Activated naive CD4-positive, alpha-beta T cell treated with anti-CD3 and anti-CD28 coated beads for 36 hours (primary cell): ENCODE measurements at regions of chr10 and their contacts with region 1.

Region 1: DNA sequence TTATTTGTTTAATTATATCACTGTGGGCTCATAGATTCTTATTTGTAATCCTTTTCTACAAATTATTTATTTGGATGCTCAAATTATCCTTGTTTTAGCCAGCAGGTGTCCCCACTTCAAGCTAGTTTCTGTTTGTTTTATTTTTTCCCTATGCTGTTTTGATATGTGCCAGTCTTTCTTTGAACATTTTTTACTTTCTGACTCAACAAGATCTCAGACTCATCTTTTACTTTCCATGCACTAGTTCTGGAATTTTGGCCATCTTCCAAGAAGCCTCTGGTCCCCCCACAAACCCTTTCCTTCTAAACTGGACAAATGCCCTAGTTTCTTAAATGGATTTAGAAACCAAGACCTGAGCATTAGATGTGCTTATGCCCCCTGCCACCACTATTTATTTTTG is 11.5 kb upstream of the MRPS16 start:
- DNase-seq: no peak
- H3K4me3 Mint-ChIP-seq: no peak overlapping the region
- H3K27ac Mint-ChIP-seq: no peak overlapping the region
- H3K4me1 Mint-ChIP-seq: peaks cover 3% of the 10 kb centered on the region
- H3K27me3 Mint-ChIP-seq: no peaks in the 10 kb centered on the region

Region 2: DNA sequence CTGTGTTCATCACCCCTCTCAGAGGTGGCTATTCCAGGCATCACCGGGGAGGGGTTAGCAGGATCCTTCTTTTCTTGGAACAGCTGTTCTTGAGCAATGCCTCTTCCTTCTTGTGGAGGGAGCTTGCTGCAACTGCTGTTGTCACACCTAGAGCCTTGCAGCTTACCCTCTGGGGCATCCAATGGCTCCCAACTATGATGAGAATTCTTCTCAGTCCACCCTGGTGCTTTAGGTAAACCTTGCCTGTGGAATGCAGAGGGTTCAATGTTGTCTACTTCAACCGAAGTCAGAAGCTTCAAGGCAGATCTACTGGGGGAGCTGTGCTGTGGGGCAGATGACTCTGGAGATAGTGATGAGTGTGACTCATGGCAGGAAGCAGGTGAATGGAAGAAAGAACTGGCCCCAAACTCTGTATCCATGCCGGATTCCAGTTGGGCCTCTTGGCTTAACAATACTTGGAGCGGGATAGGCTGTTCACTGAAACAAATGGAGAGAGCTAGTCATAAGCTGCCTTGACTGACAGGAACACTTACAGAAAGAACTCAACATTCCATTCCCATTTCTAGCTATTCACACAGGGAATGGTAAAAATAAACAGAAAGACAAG is 253.4 kb after region 1 on chr10:
- CTCF ChIA-PET with region 1: no interaction called
- intact Hi-C with region 1: no loop called
- DNase-seq: no peak
- H3K4me3 Mint-ChIP-seq: no peak overlapping the region
- H3K27ac Mint-ChIP-seq: no peak overlapping the region
- H3K4me1 Mint-ChIP-seq: no peaks in the 10 kb centered on the region
- H3K27me3 Mint-ChIP-seq: no peaks in the 10 kb centered on the region

Region 3: DNA sequence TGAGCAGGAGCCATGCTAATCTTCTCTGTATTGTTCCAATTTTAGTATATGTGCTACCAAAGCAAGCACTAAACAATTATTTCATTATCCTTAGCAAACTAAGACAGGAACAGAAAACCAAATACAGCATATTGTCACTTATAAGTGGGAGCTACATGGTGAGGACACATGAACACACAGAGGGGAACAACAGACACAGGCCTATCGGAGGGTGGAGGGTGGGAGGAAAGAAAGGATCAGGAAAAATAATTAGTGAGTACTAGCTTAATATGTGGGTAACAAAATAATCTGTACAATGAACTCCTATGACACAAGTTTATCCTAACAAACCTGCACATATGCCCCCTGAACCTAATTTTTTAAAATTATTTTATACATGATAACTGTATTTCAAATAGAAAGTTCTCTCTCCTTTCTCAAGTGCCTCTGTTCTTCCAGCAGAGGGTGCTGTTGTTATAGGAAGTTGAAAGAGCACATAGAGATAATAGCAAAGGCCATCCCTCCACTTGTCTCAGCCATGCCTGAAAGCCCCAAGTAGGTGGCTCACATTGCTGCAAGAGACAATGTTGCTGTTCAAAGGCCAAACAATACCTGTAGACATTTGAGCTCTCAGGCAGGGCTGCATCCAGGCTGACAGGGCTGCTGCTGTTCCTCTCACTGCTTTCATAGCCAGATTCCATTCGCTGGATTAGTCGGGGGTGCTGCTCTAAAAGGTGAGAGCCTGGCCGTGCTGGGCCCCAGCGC is 265.3 kb after region 1 on chr10:
- CTCF ChIA-PET with region 1: no interaction called
- intact Hi-C with region 1: loop called (anchors 1 kb)
- DNase-seq: peak; percentile 60
- H3K4me3 Mint-ChIP-seq: no peak overlapping the region
- H3K27ac Mint-ChIP-seq: no peak overlapping the region
- H3K4me1 Mint-ChIP-seq: no peaks in the 10 kb centered on the region
- H3K27me3 Mint-ChIP-seq: no peaks in the 10 kb centered on the region